Activated naive CD4-positive, alpha-beta T cell treated with anti-CD3 and anti-CD28 coated beads for 36 hours (primary cell): ENCODE measurements at regions of chr6 and their contacts with region 1.

Region 1: DNA sequence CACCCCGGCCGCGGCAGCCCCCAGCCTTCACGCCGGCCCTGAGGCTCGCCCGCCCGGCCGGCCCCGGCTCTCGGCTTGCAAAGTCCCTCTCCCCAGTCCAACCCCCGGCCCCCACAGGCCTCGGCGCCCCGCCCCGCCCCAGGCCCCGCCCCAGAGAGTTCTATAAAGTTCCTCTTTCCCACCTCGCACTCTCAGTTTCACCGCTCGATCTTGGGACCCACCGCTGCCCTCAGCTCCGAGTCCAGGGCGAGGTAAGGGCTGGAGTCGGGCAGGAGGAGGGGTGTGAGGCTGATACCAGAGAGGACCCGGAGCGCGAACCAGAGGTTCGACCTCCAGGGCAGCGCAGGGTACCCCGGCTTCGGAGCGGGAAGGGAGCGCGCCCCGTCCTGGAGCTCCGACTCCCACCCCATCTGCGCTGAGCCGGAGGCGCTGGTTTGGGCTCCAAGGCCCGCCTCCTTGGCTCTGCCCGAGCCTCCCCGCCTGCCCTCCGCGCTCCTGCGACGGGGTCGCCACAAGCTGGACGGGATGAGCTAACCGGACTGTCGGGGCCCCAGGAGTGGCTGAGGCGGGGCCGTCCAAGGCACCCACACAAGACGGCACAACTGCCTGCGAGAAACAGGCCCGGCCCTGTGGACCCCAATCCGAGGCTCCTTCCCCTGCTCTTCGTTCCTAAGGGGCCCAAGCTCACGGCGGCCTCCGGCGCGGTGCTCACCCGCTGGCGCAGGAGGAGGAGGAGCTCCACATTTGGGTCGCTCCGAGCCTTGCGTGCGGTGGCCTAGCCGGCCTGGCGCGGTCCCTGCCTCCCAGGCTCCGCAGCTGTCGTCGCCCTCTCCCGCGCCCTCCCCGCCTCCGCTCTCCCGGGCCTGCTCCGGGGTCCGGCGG is at the start of gene IRF4:
- DNase-seq: peak; percentile 70
- H3K4me3 Mint-ChIP-seq: peak within 1 kb of the TSS; percentile 93
- H3K27ac Mint-ChIP-seq: peak within 1 kb of the TSS; percentile 95
- H3K4me1 Mint-ChIP-seq: peaks cover 44% of the 10 kb centered on the region
- H3K27me3 Mint-ChIP-seq: peaks cover 4% of the 10 kb centered on the region
- total RNA-seq, gene IRF4: 500 to 504 TPM

Region 2: GRCh38 chr6:195861-196360 is 195.9 kb before region 1 on chr6:
- CTCF ChIA-PET with region 1: interaction called, 3 read pairs
- intact Hi-C with region 1: loop called (anchors 1 kb)
- DNase-seq: peak; percentile 89
- H3K4me3 Mint-ChIP-seq: no peak overlapping the region
- H3K27ac Mint-ChIP-seq: peak overlapping the region; percentile 64
- H3K4me1 Mint-ChIP-seq: peaks cover 50% of the 10 kb centered on the region
- H3K27me3 Mint-ChIP-seq: no peaks in the 10 kb centered on the region

Region 3: GRCh38 chr6:251920-252319 is 139.9 kb before region 1 on chr6:
- CTCF ChIA-PET with region 1: no interaction called
- intact Hi-C with region 1: no loop called
- DNase-seq: no peak
- H3K4me3 Mint-ChIP-seq: no peak overlapping the region
- H3K27ac Mint-ChIP-seq: peak overlapping the region; percentile 63
- H3K4me1 Mint-ChIP-seq: peaks cover 43% of the 10 kb centered on the region
- H3K27me3 Mint-ChIP-seq: no peaks in the 10 kb centered on the region

Region 4: DNA sequence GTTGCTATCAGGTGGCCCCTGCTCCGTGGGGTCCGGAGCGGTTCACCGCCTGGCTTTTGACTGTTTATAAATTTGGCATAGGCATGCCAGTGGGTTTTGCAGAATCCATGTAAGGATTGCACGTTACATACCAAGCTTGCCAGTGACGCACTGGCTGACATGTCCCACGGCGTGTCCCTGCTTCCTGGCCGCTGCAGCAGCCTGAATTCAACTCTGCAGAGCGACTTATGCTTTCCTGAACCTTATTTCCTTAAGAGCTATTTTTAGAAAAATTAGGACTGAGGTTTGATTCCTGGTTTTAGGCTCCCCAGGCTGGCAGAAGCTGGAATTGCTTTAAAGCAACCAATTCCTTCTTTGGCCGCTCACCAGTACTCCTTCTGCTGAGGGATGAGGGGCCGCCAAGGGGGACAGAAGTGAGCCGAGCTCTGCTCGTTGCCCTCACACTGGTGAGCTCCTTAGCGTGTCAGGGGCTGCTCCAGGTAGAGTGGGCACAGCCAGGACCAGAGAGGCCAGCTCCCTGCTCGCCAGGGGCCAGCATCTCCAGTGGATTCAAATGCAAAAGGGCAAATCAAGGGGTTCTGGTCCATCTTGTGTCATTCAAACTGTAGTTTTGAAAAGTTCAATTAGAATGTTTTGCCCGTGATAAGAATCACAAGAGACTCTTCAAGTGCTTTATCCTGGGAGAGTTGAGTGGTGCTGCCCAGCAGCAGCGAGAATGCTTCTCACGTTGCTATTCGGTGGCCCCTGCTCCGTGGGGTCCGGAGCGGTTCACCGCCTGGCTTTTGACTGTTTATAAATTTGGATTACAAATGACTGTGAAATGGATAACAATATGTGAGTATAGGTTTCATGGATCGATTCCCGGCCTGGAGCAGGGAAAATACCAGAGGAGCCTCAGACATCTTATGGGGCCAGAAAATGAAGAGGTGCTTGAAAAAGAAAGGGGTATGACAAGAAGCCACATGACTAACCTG is 17.8 kb before region 1 on chr6:
- CTCF ChIA-PET with region 1: no interaction called
- intact Hi-C with region 1: no loop called
- DNase-seq: no peak
- H3K4me3 Mint-ChIP-seq: no peak overlapping the region
- H3K27ac Mint-ChIP-seq: no peak overlapping the region
- H3K4me1 Mint-ChIP-seq: peaks cover 12% of the 10 kb centered on the region
- H3K27me3 Mint-ChIP-seq: peaks cover 25% of the 10 kb centered on the region

Region 5: DNA sequence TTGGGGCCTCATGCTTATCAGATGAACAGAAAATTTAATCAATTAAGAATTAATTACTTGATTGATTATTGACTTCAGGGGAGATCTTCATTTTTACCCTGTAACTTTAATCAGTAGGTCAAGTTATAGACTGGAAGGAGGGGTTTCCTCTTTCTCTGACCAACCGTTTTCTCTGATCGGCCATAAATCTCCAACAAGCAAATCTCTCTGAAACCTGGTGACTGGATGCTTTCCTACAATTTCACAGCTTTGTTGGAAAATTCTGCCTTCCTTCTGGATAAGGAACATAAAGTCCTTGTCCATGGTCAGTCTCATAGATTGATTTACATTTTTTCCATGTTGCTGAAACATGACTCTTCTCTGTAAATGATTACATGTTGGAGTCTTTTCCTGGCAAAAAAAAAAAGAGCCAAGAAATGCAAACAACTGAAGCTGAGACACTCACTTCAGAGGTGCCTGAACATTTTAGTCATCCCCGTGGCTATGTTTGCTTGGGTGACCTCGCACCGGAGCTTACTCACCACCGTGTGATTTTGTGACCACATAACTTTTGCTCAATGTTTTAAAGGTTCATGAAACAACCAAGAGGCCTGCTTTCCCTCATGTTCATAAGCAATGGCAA is 30.7 kb after region 1 on chr6:
- CTCF ChIA-PET with region 1: no interaction called
- intact Hi-C with region 1: loop called (anchors 1 kb)
- DNase-seq: peak; percentile 91
- H3K4me3 Mint-ChIP-seq: no peak overlapping the region
- H3K27ac Mint-ChIP-seq: peak overlapping the region; percentile 81
- H3K4me1 Mint-ChIP-seq: peaks cover 31% of the 10 kb centered on the region
- H3K27me3 Mint-ChIP-seq: no peaks in the 10 kb centered on the region

Region 6: DNA sequence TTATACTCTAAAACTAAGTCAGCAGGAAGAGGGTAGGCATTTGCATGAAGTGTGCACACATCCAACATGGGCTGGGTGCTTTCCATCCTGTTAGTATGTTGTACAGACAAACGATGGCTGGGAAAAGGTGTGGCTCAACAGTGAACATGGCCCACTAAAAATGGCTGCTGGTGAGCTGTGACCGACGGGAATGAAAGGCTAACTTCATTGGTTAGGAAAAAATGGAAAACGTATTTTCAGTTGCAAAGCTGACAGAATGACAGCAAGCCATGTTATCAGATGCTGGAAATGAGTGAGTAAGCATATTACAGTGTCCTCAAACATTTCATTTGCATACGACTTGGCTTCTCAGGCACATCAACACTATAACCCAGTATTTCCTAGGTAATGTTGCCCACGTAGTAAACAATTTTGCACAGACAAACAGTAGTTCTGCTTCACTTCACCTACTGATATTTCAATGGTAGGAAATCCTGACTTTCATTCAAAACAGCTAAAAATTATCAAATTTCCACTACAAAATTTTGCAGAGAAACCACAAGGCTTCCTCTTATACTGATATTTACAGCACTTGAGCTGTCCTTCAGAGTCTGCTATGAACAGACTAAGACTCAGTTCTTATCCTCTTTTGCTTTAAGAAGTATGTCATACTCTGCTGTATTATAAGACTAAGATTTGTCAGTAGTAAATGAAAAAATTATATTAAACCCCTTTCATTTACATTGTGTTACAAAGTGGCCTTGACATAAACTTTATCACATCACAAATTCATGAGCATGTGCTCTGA is 98.6 kb after region 1 on chr6:
- CTCF ChIA-PET with region 1: interaction called, 5 read pairs
- intact Hi-C with region 1: loop called (anchors 1 kb)
- DNase-seq: peak; percentile 80
- H3K4me3 Mint-ChIP-seq: peak overlapping the region; percentile 41
- H3K27ac Mint-ChIP-seq: peak overlapping the region; percentile 95
- H3K4me1 Mint-ChIP-seq: peaks cover 94% of the 10 kb centered on the region
- H3K27me3 Mint-ChIP-seq: no peaks in the 10 kb centered on the region

Region 7: DNA sequence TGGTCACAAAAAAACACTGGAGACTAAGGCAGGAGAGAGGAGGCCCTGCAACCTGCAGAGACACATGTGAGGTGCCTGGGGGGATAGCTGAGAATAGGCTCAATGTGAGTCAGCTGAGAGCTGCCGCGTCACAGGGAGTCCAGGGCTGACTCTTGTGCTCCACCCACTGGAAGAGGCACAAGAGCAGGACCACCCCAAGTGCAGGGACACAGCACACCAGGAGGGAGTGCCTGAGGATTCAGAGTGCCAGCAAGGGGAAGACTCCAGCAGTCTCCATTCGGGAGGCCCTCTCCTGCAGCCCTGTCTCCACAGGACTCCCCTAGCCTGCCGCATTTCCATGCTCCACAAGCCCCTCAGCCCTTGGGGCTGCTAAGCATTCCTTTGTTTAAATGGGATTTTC is 159.6 kb after region 1 on chr6:
- CTCF ChIA-PET with region 1: interaction called, 7 read pairs
- intact Hi-C with region 1: loop called (anchors 1 kb)
- DNase-seq: peak; percentile 56
- H3K4me3 Mint-ChIP-seq: no peak overlapping the region
- H3K27ac Mint-ChIP-seq: peak overlapping the region; percentile 79
- H3K4me1 Mint-ChIP-seq: peaks cover 57% of the 10 kb centered on the region
- H3K27me3 Mint-ChIP-seq: no peaks in the 10 kb centered on the region

Region 8: GRCh38 chr6:683742-684440 is 292.1 kb after region 1 on chr6:
- CTCF ChIA-PET with region 1: no interaction called
- intact Hi-C with region 1: loop called (anchors 1 kb)
- DNase-seq: no peak
- H3K4me3 Mint-ChIP-seq: peak overlapping the region; percentile 10
- H3K27ac Mint-ChIP-seq: no peak overlapping the region
- H3K4me1 Mint-ChIP-seq: peaks cover 52% of the 10 kb centered on the region
- H3K27me3 Mint-ChIP-seq: no peaks in the 10 kb centered on the region

Region 9: GRCh38 chr6:1039191-1039590 is 647.4 kb after region 1 on chr6:
- CTCF ChIA-PET with region 1: no interaction called
- intact Hi-C with region 1: no loop called
- DNase-seq: no peak
- H3K4me3 Mint-ChIP-seq: no peak overlapping the region
- H3K27ac Mint-ChIP-seq: no peak overlapping the region
- H3K4me1 Mint-ChIP-seq: no peaks in the 10 kb centered on the region
- H3K27me3 Mint-ChIP-seq: peaks cover 22% of the 10 kb centered on the region

Region 10: GRCh38 chr6:1311400-1312202 is 919.8 kb after region 1 on chr6 and contains the start of gene FOXQ1:
- CTCF ChIA-PET with region 1: no interaction called
- intact Hi-C with region 1: loop called (anchors 10 kb)
- DNase-seq: no peak
- H3K4me3 Mint-ChIP-seq: peak within 1 kb of the TSS; percentile 69
- H3K27ac Mint-ChIP-seq: no peak within 1 kb of the TSS
- H3K4me1 Mint-ChIP-seq: peaks cover 28% of the 10 kb centered on the region
- H3K27me3 Mint-ChIP-seq: peaks cover 61% of the 10 kb centered on the region
- total RNA-seq, gene FOXQ1: not detected